ENCODE measurements at regions of chr18 and their contacts with region 1.

Region 1: DNA sequence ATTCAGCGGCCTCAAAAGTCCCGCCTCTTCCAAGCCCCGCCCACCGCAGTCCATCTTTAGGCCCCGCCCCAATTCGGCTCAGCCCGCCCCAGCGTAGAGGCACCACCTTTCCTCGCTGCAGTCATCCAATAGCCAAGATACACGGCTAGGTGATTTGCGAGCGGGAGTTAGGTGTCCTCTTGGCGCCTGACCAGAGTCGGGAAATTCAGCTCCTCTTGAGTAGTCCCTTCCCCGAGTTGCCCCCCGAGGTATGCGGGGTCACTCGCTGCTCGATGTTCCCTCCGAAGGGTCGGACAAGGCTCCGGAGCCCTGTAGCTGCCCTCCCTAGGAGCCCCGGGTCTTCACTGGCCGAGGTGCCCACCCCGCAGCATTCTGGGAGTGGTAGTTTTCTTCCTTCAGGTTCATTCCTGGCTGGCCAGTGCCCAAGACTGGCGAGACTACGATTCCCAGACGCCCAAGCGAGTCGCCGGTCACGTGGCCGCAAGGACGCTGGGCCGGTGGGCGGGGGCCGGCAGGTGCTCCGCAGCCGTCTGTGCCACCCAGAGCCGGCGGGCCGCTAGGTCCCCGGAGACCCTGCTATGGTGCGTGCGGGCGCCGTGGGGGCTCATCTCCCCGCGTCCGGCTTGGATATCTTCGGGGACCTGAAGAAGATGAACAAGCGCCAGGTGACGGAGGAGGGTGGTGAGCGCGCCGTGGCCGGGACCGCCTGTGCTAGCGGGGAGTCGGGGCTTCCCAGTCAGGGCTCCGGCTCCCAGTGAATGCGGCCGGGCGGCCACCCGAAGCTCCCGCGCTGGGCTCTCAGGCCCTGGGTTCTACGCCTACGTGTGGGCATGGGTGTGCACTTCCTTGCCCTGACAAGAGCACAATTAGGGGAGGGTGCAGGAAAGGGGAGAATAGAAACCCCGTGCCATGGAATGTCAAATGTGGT is at the start of gene SEC11C:
- DNase-seq: peak; percentile 92 to 98
- ATAC-seq: peak; percentile 91 to 97 (median 92)
- H3K4me3 ChIP-seq: peak within 1 kb of the TSS; percentile 58
- H3K4me3 Mint-ChIP-seq: peak within 1 kb of the TSS; percentile 91
- H3K27ac ChIP-seq: peak within 1 kb of the TSS; percentile 93
- H3K27ac Mint-ChIP-seq: peak within 1 kb of the TSS; percentile 98 to 99
- H3K4me1 ChIP-seq: peaks cover 11% of the 10 kb centered on the region
- H3K4me1 Mint-ChIP-seq: peaks cover 35 to 46% of the 10 kb centered on the region in 2 donors
- H3K27me3 ChIP-seq: no peaks in the 10 kb centered on the region
- H3K27me3 Mint-ChIP-seq: peaks cover 12 to 27% of the 10 kb centered on the region in 2 donors
- CTCF ChIP-seq: no peak
- total RNA-seq, gene SEC11C: 50.9 to 76.4 (median 54.8) TPM

Region 2: DNA sequence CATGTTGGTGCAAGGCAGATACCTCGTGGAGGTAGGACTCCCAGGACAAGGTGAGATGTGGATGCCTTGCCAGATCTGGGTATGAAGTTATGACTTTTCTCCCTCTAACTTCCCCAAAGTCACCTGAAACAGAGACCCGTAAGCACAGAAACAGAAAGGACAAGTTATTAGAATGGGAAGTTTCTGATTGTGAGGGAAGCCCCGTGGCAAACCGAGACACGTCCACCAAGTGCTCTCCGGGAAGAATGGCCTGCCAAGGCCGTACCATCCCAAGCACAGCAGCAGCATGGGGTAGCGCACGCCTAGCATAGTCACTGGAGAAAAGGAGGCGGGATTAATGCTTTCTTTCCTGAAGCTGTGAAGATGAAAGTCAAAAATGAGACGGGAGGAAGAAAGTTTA is 164.3 kb before region 1 on chr18:
- intact Hi-C with region 1: no loop called
- DNase-seq: no peak
- ATAC-seq: no peak
- H3K4me3 ChIP-seq: no peak overlapping the region
- H3K4me3 Mint-ChIP-seq: no peak overlapping the region
- H3K27ac ChIP-seq: peak overlapping the region; percentile 47
- H3K27ac Mint-ChIP-seq: no peak overlapping the region
- H3K4me1 ChIP-seq: no peaks in the 10 kb centered on the region
- H3K4me1 Mint-ChIP-seq: no peaks in the 10 kb centered on the region
- H3K27me3 ChIP-seq: no peaks in the 10 kb centered on the region
- H3K27me3 Mint-ChIP-seq: peaks cover 4 to 10% of the 10 kb centered on the region in 2 donors
- CTCF ChIP-seq: no peak

Region 3: GRCh38 chr18:59358712-59359575 is 219.3 kb after region 1 on chr18 and contains the start of gene LMAN1:
- intact Hi-C with region 1: loop called (anchors 2 kb)
- DNase-seq: peak; percentile 89 to 95
- ATAC-seq: peak; percentile 93 to 99 (median 96)
- H3K4me3 ChIP-seq: peak within 1 kb of the TSS; percentile 82
- H3K4me3 Mint-ChIP-seq: peak within 1 kb of the TSS; percentile 94
- H3K27ac ChIP-seq: peak within 1 kb of the TSS; percentile 76
- H3K27ac Mint-ChIP-seq: peak within 1 kb of the TSS; percentile 78 to 92
- H3K4me1 ChIP-seq: peaks cover 11% of the 10 kb centered on the region
- H3K4me1 Mint-ChIP-seq: peaks cover 25 to 30% of the 10 kb centered on the region in 2 donors
- H3K27me3 ChIP-seq: peaks cover 10% of the 10 kb centered on the region
- H3K27me3 Mint-ChIP-seq: peaks cover 7 to 17% of the 10 kb centered on the region in 2 donors
- CTCF ChIP-seq: no peak
- total RNA-seq, gene LMAN1: 50.1 to 58.3 (median 57.6) TPM

Measured in natural killer cell (primary cell).